CD4-positive, alpha-beta T cell (primary cell): ENCODE measurements at regions of chr2 and their contacts with region 1.

Region 1: GRCh38 chr2:38682008-38682575 is 16.2 kb downstream of the GALM start:
- DNase-seq: peak in 4 of 14 experiments; percentile 28 to 82 (median 76)
- ATAC-seq: peak; percentile 88
- H3K4me3 ChIP-seq: peak overlapping the region; percentile 31
- H3K4me3 Mint-ChIP-seq: peak overlapping the region; percentile 49
- H3K27ac ChIP-seq: peak overlapping the region; percentile 71 to 78
- H3K27ac Mint-ChIP-seq: peak overlapping the region; percentile 86
- H3K4me1 ChIP-seq: peaks cover 55% of the 10 kb centered on the region
- H3K4me1 Mint-ChIP-seq: peaks cover 50% of the 10 kb centered on the region
- H3K27me3 ChIP-seq: no peaks in the 10 kb centered on the region
- H3K27me3 Mint-ChIP-seq: no peaks in the 10 kb centered on the region
- CTCF ChIP-seq: peak; percentile 23

Region 2: DNA sequence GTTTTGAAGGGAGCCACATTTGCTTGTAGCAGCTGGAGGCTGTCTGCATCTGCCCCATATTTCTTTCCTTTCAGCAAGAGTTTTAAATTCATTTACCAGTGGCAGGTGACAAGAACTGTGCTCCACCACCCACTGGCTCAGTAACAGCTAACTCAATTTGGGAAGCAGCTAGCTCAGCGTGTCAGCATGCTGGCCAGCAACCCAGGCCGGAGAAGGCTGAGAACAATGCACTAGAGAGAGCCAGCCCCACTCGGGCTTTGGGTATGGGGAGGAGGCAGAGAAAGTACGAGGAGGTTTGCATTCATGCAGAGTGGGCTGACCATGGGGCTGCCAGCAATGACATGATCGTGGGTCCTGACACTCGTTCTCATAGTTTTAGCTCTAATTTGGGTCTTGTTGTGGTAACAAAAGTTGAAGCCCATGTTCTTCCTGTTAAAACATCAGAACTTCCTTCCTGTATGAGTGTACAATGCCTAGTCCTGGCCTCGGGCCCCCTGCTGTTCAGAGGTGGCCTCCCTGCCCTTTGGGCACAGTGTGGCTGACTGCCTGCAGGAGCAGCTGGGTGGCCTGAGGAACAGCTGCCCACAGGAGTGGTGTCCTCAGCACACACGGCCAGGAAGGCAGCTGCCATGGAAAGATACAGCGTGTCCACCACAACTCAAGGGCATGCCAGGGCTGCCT is 1033.6 kb before region 1 on chr2:
- CTCF ChIA-PET with region 1: no interaction called
- POLR2A ChIA-PET with region 1: no interaction called
- intact Hi-C with region 1: no loop called
- DNase-seq: peak in 13 of 14 experiments; percentile 17 to 77 (median 43)
- ATAC-seq: peak; percentile 67
- H3K4me3 ChIP-seq: peak overlapping the region; percentile 4
- H3K4me3 Mint-ChIP-seq: peak overlapping the region; percentile 44
- H3K27ac ChIP-seq: peak overlapping the region; percentile 24 to 64
- H3K27ac Mint-ChIP-seq: peak overlapping the region; percentile 79
- H3K4me1 ChIP-seq: peaks cover 82% of the 10 kb centered on the region
- H3K4me1 Mint-ChIP-seq: peaks cover 91% of the 10 kb centered on the region
- H3K27me3 ChIP-seq: no peaks in the 10 kb centered on the region
- H3K27me3 Mint-ChIP-seq: no peaks in the 10 kb centered on the region
- CTCF ChIP-seq: peak; percentile 19

Region 3: DNA sequence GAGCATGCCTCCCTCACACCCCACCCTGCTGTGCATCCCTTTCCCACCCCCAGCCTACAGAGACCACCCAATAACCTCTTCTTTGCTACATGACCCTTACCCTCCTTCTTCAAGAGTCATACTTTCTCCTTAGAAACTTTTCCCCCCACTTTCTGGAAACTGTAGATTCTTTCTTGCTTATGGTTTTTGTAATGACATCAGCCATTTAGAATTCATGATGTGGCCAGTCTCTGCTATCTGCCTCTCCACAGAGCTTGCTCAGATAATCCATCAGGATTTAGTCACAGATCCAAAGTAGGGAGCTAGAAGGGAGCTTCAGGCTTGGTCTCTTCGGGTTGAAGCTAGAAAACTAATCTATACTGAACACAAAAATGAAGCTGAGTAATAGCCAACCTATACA is 20.3 kb after region 1 on chr2:
- CTCF ChIA-PET with region 1: interaction called, 5 read pairs
- POLR2A ChIA-PET with region 1: interaction called, 6 read pairs
- intact Hi-C with region 1: loop called in 1 of 2 experiments (anchors 2 kb)
- DNase-seq: no peak
- ATAC-seq: no peak
- H3K4me3 ChIP-seq: no peak overlapping the region
- H3K4me3 Mint-ChIP-seq: peak overlapping the region; percentile 58
- H3K27ac ChIP-seq: no peak overlapping the region
- H3K27ac Mint-ChIP-seq: peak overlapping the region; percentile 85
- H3K4me1 ChIP-seq: peaks cover 59% of the 10 kb centered on the region
- H3K4me1 Mint-ChIP-seq: peaks cover 63% of the 10 kb centered on the region
- H3K27me3 ChIP-seq: no peaks in the 10 kb centered on the region
- H3K27me3 Mint-ChIP-seq: no peaks in the 10 kb centered on the region
- CTCF ChIP-seq: no peak

Region 4: GRCh38 chr2:38720613-38721241 is 38.6 kb after region 1 on chr2:
- CTCF ChIA-PET with region 1: interaction called, 25 read pairs
- POLR2A ChIA-PET with region 1: interaction called, 6 read pairs
- intact Hi-C with region 1: loop called (anchors 1 to 5 kb)
- DNase-seq: no peak
- ATAC-seq: no peak
- H3K4me3 ChIP-seq: no peak overlapping the region
- H3K4me3 Mint-ChIP-seq: no peak overlapping the region
- H3K27ac ChIP-seq: peak overlapping the region in 1 of 2 donors; percentile 7
- H3K27ac Mint-ChIP-seq: peak overlapping the region; percentile 25
- H3K4me1 ChIP-seq: peaks cover 37% of the 10 kb centered on the region
- H3K4me1 Mint-ChIP-seq: peaks cover 53% of the 10 kb centered on the region
- H3K27me3 ChIP-seq: no peaks in the 10 kb centered on the region
- H3K27me3 Mint-ChIP-seq: no peaks in the 10 kb centered on the region
- CTCF ChIP-seq: no peak